ENCODE measurements at regions of chr3 and their contacts with region 1.

Region 1: DNA sequence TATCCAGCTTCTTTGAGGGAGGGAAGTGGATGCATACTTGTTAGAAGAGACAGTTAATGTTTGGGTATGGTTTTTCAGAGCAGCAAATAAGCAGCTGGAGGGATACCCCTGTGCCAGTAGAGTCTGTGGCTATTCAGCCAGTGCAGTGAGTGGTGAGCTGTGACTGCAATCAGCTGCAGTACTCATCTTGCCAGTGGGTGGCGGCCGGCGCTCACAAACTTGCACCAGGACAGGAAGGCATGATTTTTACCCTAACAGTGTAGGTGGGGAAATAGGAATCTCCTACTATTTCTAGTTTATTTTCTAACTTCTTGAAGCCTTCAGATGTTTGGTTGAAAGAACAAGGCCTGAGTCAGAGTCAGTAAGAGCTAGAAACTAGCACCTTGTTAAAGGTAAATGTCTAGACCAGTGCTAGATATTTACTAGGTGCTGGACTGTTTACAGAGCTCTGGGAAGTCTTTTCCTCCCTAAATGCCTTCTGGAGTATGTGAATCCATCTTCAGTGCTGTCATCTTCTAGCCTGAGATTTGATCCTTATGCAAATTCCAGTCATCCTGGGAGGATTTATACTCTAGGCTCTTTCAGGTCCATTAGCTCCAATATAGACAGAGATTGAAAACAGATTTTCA is 23.6 kb downstream of the TIMP4 start:
- DNase-seq: peak; percentile 64
- ATAC-seq: peak; percentile 97
- H3K4me3 ChIP-seq: no peak overlapping the region
- H3K27ac ChIP-seq: no peak overlapping the region
- H3K4me1 ChIP-seq: no peaks in the 10 kb centered on the region
- H3K27me3 ChIP-seq: peaks cover 24% of the 10 kb centered on the region
- CTCF ChIP-seq: peak; percentile 91
- POLR2A ChIP-seq: no peak
- RAD21 ChIP-seq: peak; percentile 97

Region 2: DNA sequence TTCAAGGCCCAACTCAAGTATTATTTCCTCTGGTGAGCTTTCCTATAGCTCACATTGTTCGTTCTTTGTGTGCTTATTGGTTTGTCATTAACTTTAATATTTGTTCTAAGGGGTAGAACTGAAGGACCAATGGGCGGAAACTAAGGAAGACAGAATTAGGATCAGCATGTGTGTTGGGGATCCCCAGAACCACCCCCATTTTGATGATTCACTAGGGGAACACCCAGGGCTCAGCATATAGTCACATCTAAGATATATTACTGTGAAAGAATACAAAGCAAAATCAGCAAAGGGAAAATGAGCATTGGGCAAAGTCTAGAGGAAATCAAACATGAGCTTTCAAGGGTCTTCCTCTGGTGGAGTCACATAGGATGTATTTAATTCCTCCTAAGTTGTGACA is 53.3 kb before region 1 on chr3:
- CTCF ChIA-PET with region 1: no interaction called
- POLR2A ChIA-PET with region 1: no interaction called
- dilution Hi-C with region 1: no loop called
- in situ Hi-C with region 1: no loop called
- intact Hi-C with region 1: no loop called
- DNase-seq: no peak
- ATAC-seq: no peak
- H3K4me3 ChIP-seq: no peak overlapping the region
- H3K27ac ChIP-seq: no peak overlapping the region
- H3K4me1 ChIP-seq: no peaks in the 10 kb centered on the region
- H3K27me3 ChIP-seq: no peaks in the 10 kb centered on the region
- CTCF ChIP-seq: no peak
- POLR2A ChIP-seq: no peak
- RAD21 ChIP-seq: no peak

Region 3: GRCh38 chr3:12287727-12288191 is 152.6 kb after region 1 on chr3:
- CTCF ChIA-PET with region 1: no interaction called
- POLR2A ChIA-PET with region 1: no interaction called
- dilution Hi-C with region 1: no loop called
- in situ Hi-C with region 1: no loop called
- intact Hi-C with region 1: loop called (anchors 2 kb)
- DNase-seq: no peak
- ATAC-seq: peak; percentile 87
- H3K4me3 ChIP-seq: peak overlapping the region; percentile 95
- H3K27ac ChIP-seq: peak overlapping the region; percentile 50
- H3K4me1 ChIP-seq: peaks cover 2% of the 10 kb centered on the region
- H3K27me3 ChIP-seq: no peaks in the 10 kb centered on the region
- CTCF ChIP-seq: no peak
- POLR2A ChIP-seq: no peak
- RAD21 ChIP-seq: peak; percentile 38

Region 4: DNA sequence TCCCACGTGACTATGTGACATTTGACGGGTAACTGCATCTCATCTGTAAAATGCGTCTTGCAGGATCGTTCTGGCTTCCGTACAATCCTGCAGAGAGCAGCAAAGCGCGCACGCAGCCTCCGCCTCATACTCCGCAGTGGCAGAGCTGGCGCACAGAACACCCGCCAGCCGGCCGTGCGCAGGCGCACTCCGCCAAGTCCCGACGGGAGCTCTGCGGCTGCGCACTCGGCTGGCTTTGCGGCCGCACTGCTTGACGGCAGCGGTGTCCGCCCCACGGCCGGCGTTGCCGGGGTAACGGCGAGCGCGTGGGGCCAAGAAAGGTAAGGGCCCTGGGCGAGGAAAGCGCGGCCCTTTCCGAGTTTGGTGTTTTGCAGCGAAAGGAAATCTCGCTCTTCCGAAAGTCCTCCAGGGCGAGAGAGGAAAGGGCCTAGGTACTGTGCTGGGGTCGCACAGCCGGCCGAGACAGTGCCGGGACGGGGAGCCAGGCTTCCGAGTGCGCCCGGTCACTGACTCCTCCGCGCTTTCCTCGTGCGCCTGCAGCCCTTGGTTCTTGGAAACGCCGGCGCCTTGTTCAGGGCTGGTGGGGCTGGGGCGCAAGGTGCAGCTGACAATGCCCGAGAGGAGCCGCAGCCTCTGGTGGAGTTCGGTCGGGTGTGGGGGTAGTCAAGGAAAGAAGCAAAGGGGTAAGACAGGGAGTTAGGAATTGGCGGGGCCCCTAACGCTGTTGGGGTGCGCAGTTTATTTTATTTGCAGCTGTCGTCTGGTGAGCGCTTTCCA is 349.2 kb after region 1 on chr3 and contains the start of gene TSEN2:
- CTCF ChIA-PET with region 1: interaction called, 11 read pairs
- POLR2A ChIA-PET with region 1: no interaction called
- dilution Hi-C with region 1: no loop called
- in situ Hi-C with region 1: loop called (anchors 5 kb)
- intact Hi-C with region 1: loop called (anchors 1 kb)
- DNase-seq: peak; percentile 94
- ATAC-seq: peak; percentile 96
- H3K4me3 ChIP-seq: peak within 1 kb of the TSS; percentile 78
- H3K27ac ChIP-seq: peak within 1 kb of the TSS; percentile 76
- H3K4me1 ChIP-seq: no peaks in the 10 kb centered on the region; the same call in 1 of the 2 replicates
- H3K27me3 ChIP-seq: no peaks in the 10 kb centered on the region
- CTCF ChIP-seq: peak; percentile 47
- POLR2A ChIP-seq: no peak
- RAD21 ChIP-seq: peak; percentile 54
- total RNA-seq, gene TSEN2: 14.2 and 15.0 TPM in 2 replicates

Region 5: DNA sequence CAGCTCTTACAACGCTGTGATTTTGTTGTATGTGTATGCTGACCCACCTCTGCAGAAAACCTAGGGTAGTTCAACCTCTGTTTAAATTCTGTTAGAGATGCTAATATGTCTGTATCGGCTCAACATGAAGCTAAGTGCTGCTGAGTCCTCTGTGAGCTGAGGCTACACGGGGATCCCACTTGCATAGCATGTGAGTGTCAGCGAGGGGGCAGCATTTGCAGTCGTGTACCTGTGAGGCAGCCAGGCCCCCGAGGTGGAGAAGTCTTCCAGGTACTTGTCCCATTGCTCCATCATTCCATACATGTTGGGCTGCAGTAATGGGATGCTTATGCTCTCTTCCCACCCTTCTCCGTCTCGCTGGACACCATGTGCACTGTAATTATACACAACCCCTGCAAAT is 406.5 kb after region 1 on chr3:
- CTCF ChIA-PET with region 1: no interaction called
- POLR2A ChIA-PET with region 1: no interaction called
- dilution Hi-C with region 1: no loop called
- in situ Hi-C with region 1: no loop called
- intact Hi-C with region 1: loop called (anchors 1 kb)
- DNase-seq: no peak
- ATAC-seq: no peak
- H3K4me3 ChIP-seq: no peak overlapping the region
- H3K27ac ChIP-seq: no peak overlapping the region
- H3K4me1 ChIP-seq: no peaks in the 10 kb centered on the region
- H3K27me3 ChIP-seq: no peaks in the 10 kb centered on the region
- CTCF ChIP-seq: no peak
- POLR2A ChIP-seq: no peak
- RAD21 ChIP-seq: no peak

Region 6: GRCh38 chr3:12891985-12892839 is 757.1 kb after region 1 on chr3:
- CTCF ChIA-PET with region 1: no interaction called
- POLR2A ChIA-PET with region 1: no interaction called
- dilution Hi-C with region 1: no loop called
- in situ Hi-C with region 1: loop called (anchors 25 kb)
- intact Hi-C with region 1: loop called (anchors 2 kb)
- DNase-seq: peak; percentile 66
- ATAC-seq: peak; percentile 79
- H3K4me3 ChIP-seq: no peak overlapping the region
- H3K27ac ChIP-seq: no peak overlapping the region
- H3K4me1 ChIP-seq: no peaks in the 10 kb centered on the region
- H3K27me3 ChIP-seq: peaks cover 11% of the 10 kb centered on the region
- CTCF ChIP-seq: peak; percentile 96
- POLR2A ChIP-seq: no peak
- RAD21 ChIP-seq: peak; percentile 97